CD4-positive, alpha-beta memory T cell (primary cell): ENCODE measurements at regions of chr11 and their contacts with region 1.

Region 1: DNA sequence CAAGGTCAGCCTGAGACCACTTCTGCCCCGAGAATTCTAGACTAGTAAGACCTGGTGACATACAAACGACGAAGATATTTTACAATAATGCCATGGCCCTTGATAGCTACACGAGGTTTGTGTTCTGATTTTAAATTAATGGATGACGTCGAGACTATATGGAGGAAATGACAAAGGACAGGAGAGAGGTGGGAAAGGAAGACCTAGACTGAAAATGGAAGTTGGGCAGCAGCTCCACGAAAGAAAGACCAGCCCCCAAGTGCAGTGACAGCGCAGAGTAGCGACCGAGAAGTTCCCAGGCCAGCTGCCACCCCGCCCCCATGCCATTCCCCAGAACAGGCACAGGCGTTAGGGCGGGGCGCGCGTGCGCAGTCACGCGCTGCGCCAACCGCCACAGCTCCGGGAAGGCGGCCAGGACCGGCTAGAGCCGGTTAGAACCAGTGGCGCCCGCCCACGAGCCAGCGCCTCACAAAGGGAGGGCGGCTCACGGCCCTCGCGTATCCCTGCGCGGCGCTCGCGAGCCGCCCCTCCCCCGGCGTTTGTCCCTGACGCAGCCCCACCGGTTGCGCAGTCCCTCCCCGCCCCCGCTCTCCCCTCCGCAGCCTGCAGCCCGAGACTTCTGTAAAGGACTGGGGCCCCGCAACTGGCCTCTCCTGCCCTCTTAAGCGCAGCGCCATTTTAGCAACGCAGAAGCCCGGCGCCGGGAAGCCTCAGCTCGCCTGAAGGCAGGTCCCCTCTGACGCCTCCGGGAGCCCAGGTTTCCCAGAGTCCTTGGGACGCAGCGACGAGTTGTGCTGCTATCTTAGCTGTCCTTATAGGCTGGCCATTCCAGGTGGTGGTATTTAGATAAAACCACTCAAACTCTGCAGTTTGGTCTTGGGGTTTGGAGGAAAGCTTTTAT is 1.5 kb upstream of the MALAT1 start:
- DNase-seq: peak; percentile 97 to 98 (median 97)
- H3K4me3 ChIP-seq: peak overlapping the region; percentile 96 to 99
- H3K4me3 Mint-ChIP-seq: peak overlapping the region in 1 of 8 donors; percentile 85
- H3K27ac ChIP-seq: peak overlapping the region; percentile 97
- H3K27ac Mint-ChIP-seq: no peak overlapping the region
- H3K4me1 ChIP-seq: peaks cover 16% of the 10 kb centered on the region
- H3K4me1 Mint-ChIP-seq: peaks cover 7 to 41% (median 20%) of the 10 kb centered on the region in 4 donors
- H3K27me3 ChIP-seq: no peaks in the 10 kb centered on the region
- H3K27me3 Mint-ChIP-seq: peaks cover 0 to 3% of the 10 kb centered on the region in 2 donors

Region 2: DNA sequence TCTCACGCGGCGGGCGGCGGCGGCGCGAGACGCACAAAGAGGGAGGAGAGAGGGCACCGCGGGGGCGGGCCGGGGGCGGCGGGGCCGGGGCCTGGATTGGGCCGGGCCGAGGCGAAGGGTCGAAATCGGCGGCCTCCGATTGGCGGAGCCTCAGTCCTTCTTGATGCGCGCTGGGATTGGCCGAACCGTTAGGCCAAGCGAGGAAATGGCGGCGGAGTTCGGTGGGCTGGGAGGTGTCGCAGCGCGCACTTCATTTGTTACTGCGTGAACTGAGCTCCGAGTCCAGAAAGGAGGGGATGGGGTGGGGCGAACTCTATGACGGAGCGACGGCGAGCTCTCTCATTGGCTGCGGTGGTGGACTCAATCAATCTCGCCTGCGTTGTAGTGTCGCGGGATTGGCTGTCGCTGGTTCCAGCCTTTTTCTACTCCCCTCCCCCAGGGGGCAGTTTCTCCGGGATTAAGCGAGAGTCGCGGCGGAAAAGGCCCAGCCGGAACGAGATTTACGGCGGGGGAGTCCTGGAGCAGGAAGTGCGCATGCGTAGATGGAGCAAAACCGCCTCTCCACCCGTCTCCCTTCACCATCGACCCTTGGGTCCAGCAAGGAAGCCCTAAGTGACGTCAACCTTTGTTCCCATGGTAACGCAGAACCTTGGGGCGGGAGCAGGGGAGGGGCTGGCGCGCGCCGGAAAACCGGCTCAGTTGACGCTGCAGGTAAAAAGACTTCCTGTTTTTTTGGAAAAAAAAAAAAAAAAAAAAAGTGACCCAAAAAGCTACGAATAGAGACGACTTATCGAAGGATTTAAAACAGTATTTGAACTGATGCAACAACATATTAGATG is 718.7 kb before region 1 on chr11 and contains the start of gene SF1:
- CTCF ChIA-PET with region 1: no interaction called
- POLR2A ChIA-PET with region 1: interaction called, 17 read pairs
- intact Hi-C with region 1: no loop called
- DNase-seq: peak; percentile 99 to 100 (median 100)
- H3K4me3 ChIP-seq: peak within 1 kb of the TSS; percentile 94 to 98
- H3K4me3 Mint-ChIP-seq: peak within 1 kb of the TSS; percentile 89 to 96 (median 94)
- H3K27ac ChIP-seq: peak within 1 kb of the TSS; percentile 98
- H3K27ac Mint-ChIP-seq: peak within 1 kb of the TSS; percentile 98 to 100 (median 98)
- H3K4me1 ChIP-seq: peaks cover 57% of the 10 kb centered on the region
- H3K4me1 Mint-ChIP-seq: peaks cover 41 to 70% (median 55%) of the 10 kb centered on the region in 4 donors
- H3K27me3 ChIP-seq: no peaks in the 10 kb centered on the region
- H3K27me3 Mint-ChIP-seq: peaks cover 0 to 4% of the 10 kb centered on the region in 2 donors
- total RNA-seq, gene SF1: 805 to 832 TPM

Region 3: DNA sequence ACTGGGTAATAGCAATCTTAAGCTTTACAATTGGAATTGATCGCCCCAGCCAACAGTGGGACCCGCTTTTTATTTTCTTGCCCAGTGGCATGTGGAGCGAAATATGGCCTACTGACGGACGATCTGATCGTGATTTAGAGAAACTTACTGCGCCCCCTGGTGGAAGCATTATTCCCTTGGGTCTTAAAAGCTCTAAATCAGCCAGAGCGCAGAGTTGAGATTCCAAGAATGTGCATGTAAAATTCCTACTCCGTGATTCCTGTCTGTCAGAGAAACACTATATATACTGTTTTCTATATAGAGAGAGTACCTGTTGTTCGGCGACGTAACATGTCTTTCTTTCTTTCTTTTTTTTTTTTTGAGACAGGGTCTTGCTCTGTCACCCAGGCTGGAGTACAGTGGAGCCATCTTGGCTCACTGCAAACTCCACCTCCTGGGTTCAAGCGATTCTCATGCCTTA is 167.4 kb before region 1 on chr11:
- CTCF ChIA-PET with region 1: interaction called, 3 read pairs
- POLR2A ChIA-PET with region 1: interaction called, 21 read pairs
- intact Hi-C with region 1: no loop called
- DNase-seq: peak; percentile 69 to 81 (median 75)
- H3K4me3 ChIP-seq: no peak overlapping the region
- H3K4me3 Mint-ChIP-seq: peak overlapping the region in 3 of 8 donors; percentile 28 to 64 (median 43)
- H3K27ac ChIP-seq: no peak overlapping the region
- H3K27ac Mint-ChIP-seq: peak overlapping the region in 4 of 7 donors; percentile 53 to 86 (median 68)
- H3K4me1 ChIP-seq: peaks cover 11% of the 10 kb centered on the region
- H3K4me1 Mint-ChIP-seq: peaks cover 8 to 22% (median 14%) of the 10 kb centered on the region in 4 donors
- H3K27me3 ChIP-seq: no peaks in the 10 kb centered on the region
- H3K27me3 Mint-ChIP-seq: peaks cover 0 to 2% of the 10 kb centered on the region in 2 donors

Region 4: DNA sequence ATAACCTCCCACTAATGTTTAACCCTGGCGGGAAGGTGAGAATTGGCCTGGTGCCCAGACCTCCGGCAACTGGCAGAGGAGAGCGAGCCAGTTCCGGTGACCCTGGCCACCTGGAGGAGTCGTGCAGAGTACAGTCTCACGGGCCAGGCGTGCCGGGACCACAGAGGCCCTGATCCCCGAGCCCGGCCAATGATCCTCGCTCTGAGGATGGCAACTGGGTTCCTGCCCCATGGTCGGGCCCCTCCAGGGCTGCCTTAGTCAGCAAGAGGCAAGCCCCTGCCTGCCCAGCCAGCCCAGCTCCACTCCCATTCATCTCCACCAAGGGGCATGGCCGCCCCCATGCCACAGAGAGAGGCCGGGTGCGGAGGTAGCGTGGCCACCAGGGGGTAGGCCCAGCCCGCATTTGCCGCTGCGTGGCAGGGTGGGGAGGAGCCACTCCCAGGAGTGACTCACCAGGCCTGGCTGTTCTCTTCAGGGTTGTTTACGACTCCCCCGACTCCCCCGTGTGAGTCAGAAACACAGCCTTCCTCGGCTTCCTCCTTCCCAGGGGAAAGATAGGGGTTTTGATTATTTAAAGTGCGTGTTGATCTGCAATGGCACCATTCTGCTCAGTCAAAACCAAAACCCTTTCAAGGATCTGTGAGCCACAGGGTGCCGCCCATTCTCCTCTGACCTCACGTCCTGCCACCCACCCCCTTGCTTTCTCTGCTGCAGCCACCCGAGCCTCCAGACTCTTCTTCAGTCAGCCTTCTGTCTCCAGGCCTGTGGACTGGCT is 115.2 kb before region 1 on chr11 and contains the start of gene SLC25A45:
- CTCF ChIA-PET with region 1: interaction called, 6 read pairs
- POLR2A ChIA-PET with region 1: interaction called, 654 read pairs
- intact Hi-C with region 1: no loop called
- DNase-seq: peak; percentile 89 to 98 (median 91)
- H3K4me3 ChIP-seq: peak within 1 kb of the TSS; percentile 67 to 76
- H3K4me3 Mint-ChIP-seq: peak within 1 kb of the TSS; percentile 85 to 95 (median 91)
- H3K27ac ChIP-seq: peak within 1 kb of the TSS; percentile 94
- H3K27ac Mint-ChIP-seq: peak within 1 kb of the TSS; percentile 96 to 100 (median 99)
- H3K4me1 ChIP-seq: peaks cover 58% of the 10 kb centered on the region
- H3K4me1 Mint-ChIP-seq: peaks cover 22 to 63% (median 44%) of the 10 kb centered on the region in 4 donors
- H3K27me3 ChIP-seq: no peaks in the 10 kb centered on the region
- H3K27me3 Mint-ChIP-seq: no peaks in the 10 kb centered on the region
- total RNA-seq, gene SLC25A45: 17.0 to 24.2 TPM

Region 5: DNA sequence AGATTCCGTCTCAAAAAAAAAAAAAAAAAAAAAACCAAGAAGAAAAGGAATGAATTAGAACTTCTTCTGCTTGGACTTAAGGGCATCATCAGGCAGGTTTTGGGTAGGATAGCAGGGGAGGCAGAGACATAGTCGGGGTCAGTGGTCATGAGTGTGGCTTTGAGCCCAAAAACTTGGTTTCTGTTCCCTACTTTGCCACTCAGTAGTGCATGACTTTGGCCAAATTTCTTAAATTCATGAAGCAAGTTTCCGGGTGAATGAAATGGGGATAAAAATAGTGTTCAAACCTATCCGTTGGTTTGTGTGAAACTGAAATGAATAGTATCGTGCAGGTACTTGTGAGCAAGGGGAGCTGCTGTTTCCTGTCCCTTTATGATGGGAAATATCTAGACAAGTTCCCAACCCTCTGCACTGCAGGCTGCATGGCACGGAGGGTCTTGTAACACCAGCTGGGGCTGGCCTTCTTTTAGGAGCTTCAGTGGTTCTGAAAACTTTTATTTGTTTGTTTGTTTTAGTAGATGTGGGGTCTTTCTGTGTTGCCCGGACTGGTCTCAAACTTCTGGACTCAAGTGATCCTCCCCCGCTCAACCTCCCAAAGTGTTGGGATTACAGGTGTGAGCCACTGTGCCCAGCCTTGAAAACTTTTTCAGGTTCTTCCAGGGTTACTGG is 56.4 kb before region 1 on chr11:
- CTCF ChIA-PET with region 1: no interaction called
- POLR2A ChIA-PET with region 1: interaction called, 86 read pairs
- intact Hi-C with region 1: no loop called
- DNase-seq: no peak
- H3K4me3 ChIP-seq: no peak overlapping the region
- H3K4me3 Mint-ChIP-seq: peak overlapping the region in 6 of 8 donors; percentile 22 to 72 (median 60)
- H3K27ac ChIP-seq: peak overlapping the region; percentile 32
- H3K27ac Mint-ChIP-seq: peak overlapping the region; percentile 24 to 98 (median 83)
- H3K4me1 ChIP-seq: peaks cover 47% of the 10 kb centered on the region
- H3K4me1 Mint-ChIP-seq: peaks cover 33 to 79% (median 56%) of the 10 kb centered on the region in 4 donors
- H3K27me3 ChIP-seq: no peaks in the 10 kb centered on the region
- H3K27me3 Mint-ChIP-seq: no peaks in the 10 kb centered on the region

Region 6: DNA sequence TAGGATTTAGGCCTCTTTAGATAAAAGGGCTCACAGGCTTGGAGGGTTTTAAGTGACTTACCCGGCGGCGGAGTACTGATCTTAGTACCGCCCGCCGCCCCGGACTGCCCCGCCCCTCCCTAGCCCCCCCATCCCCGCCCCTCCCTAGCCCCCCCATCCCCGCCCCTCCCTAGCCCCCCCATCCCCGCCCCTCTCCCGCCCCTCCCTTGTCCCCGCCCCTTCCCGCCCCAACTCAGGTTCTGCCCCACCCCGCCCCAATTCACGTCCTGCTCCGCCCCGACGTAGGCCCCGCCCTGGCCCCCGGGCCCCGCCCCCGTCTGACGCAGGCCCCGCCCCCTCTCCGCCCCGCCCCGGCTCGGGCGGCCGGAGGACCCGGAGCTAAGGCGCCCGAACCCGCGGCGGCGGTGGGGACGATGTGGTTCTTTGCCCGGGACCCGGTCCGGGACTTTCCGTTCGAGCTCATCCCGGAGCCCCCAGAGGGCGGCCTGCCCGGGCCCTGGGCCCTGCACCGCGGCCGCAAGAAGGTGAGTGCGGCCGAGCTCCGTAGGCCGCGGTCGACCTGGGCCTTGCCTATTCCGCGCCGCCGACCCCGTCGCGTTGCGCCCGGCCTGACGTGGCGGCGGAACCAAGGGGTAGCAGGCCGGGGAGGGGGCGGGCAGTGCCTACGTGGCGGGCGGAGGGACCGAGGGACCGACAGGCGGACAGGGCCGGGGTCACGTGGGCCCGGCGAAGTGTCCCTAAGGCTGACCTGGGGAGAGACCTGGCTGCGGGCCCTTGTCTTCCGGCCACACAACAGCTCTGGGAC is 27.6 kb after region 1 on chr11 and contains the start of gene SCYL1:
- CTCF ChIA-PET with region 1: interaction called, 3 read pairs
- POLR2A ChIA-PET with region 1: interaction called, 171 read pairs
- intact Hi-C with region 1: no loop called
- DNase-seq: peak; percentile 72 to 82 (median 75)
- H3K4me3 ChIP-seq: peak within 1 kb of the TSS; percentile 78 to 83
- H3K4me3 Mint-ChIP-seq: peak within 1 kb of the TSS; percentile 81 to 92 (median 88)
- H3K27ac ChIP-seq: peak within 1 kb of the TSS; percentile 84
- H3K27ac Mint-ChIP-seq: peak within 1 kb of the TSS; percentile 81 to 98 (median 94)
- H3K4me1 ChIP-seq: peaks cover 54% of the 10 kb centered on the region
- H3K4me1 Mint-ChIP-seq: peaks cover 35 to 63% (median 49%) of the 10 kb centered on the region in 4 donors
- H3K27me3 ChIP-seq: no peaks in the 10 kb centered on the region
- H3K27me3 Mint-ChIP-seq: no peaks in the 10 kb centered on the region
- total RNA-seq, gene SCYL1: 72.5 to 81.3 TPM

Region 7: GRCh38 chr11:65615229-65615941 is 118.0 kb after region 1 on chr11 and contains the start of gene PCNX3:
- CTCF ChIA-PET with region 1: no interaction called
- POLR2A ChIA-PET with region 1: interaction called, 46 read pairs
- intact Hi-C with region 1: no loop called
- DNase-seq: peak; percentile 100
- H3K4me3 ChIP-seq: peak within 1 kb of the TSS; percentile 74 to 96
- H3K4me3 Mint-ChIP-seq: peak within 1 kb of the TSS; percentile 95 to 99 (median 96)
- H3K27ac ChIP-seq: peak within 1 kb of the TSS; percentile 96
- H3K27ac Mint-ChIP-seq: peak within 1 kb of the TSS; percentile 90 to 100 (median 99)
- H3K4me1 ChIP-seq: peaks cover 46% of the 10 kb centered on the region
- H3K4me1 Mint-ChIP-seq: peaks cover 23 to 59% (median 46%) of the 10 kb centered on the region in 4 donors
- H3K27me3 ChIP-seq: no peaks in the 10 kb centered on the region
- H3K27me3 Mint-ChIP-seq: no peaks in the 10 kb centered on the region
- total RNA-seq, gene PCNX3: 63.3 to 66.3 TPM